Natural killer cell (primary cell): ENCODE measurements at regions of chr13 and their contacts with region 1.

Region 1: GRCh38 chr13:48334534-48335127 is 31.1 kb downstream of the RB1 start:
- DNase-seq: peak in 1 of 2 donors; percentile 74
- ATAC-seq: peak; percentile 62 to 84 (median 77)
- H3K4me3 ChIP-seq: no peak overlapping the region
- H3K4me3 Mint-ChIP-seq: no peak overlapping the region
- H3K27ac ChIP-seq: no peak overlapping the region
- H3K27ac Mint-ChIP-seq: no peak overlapping the region
- H3K4me1 ChIP-seq: no peaks in the 10 kb centered on the region
- H3K4me1 Mint-ChIP-seq: peaks cover 5 to 9% of the 10 kb centered on the region in 2 donors
- H3K27me3 ChIP-seq: no peaks in the 10 kb centered on the region
- H3K27me3 Mint-ChIP-seq: no peaks in the 10 kb centered on the region
- CTCF ChIP-seq: peak; percentile 94

Region 2: DNA sequence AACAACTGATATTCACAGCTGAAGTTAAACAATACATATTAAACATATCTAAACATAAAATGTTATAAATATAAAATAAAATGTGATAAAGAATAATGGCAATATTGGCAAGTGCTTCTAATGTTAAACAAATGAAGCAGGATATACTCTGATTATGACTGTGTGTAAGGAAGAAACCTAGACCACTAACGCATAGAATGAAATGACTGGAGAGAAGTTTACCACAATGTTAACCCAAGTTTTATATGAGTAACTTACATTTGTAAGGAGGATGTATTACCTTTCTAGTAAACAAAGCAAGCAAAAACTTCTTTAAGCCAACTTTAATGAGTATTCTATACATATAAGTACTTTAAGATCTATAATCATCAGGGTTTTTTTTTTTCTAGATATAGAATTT is 12.0 kb after region 1 on chr13:
- intact Hi-C with region 1: no loop called
- DNase-seq: no peak
- ATAC-seq: no peak
- H3K4me3 ChIP-seq: no peak overlapping the region
- H3K4me3 Mint-ChIP-seq: no peak overlapping the region
- H3K27ac ChIP-seq: no peak overlapping the region
- H3K27ac Mint-ChIP-seq: no peak overlapping the region
- H3K4me1 ChIP-seq: no peaks in the 10 kb centered on the region
- H3K4me1 Mint-ChIP-seq: peaks cover 15 to 19% of the 10 kb centered on the region in 2 donors
- H3K27me3 ChIP-seq: no peaks in the 10 kb centered on the region
- H3K27me3 Mint-ChIP-seq: no peaks in the 10 kb centered on the region
- CTCF ChIP-seq: no peak

Region 3: DNA sequence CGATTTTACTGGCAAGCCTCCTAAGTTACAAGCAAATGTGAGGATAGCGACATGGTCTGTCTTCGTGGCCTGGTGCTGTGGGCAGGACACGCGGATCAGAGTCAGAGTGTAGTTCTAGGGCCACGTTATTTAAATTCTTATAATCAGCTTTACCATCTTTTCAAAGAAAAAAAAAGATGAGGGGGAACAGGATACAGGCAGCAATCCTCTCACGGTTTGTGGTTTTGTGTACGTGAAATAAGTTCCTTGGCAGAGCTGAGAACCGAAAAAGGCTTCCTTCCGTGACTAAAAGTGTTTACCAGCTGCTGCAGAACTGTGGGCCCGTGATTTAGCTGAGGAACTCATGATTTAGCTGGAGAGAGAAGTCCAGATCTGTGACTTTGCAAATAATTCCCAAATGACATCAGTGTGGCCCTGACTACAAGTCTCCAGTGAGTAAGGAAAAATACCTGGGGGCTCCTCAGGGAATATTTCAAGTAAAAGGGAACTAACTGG is 171.0 kb after region 1 on chr13:
- intact Hi-C with region 1: loop called (anchors 10 kb)
- DNase-seq: peak in 1 of 2 donors; percentile 91
- ATAC-seq: peak; percentile 17 to 65 (median 50)
- H3K4me3 ChIP-seq: no peak overlapping the region
- H3K4me3 Mint-ChIP-seq: peak overlapping the region; percentile 85
- H3K27ac ChIP-seq: peak overlapping the region; percentile 80
- H3K27ac Mint-ChIP-seq: peak overlapping the region; percentile 91 to 97
- H3K4me1 ChIP-seq: peaks cover 48% of the 10 kb centered on the region
- H3K4me1 Mint-ChIP-seq: peaks cover 57 to 75% of the 10 kb centered on the region in 2 donors
- H3K27me3 ChIP-seq: no peaks in the 10 kb centered on the region
- H3K27me3 Mint-ChIP-seq: no peaks in the 10 kb centered on the region
- CTCF ChIP-seq: no peak

Region 4: DNA sequence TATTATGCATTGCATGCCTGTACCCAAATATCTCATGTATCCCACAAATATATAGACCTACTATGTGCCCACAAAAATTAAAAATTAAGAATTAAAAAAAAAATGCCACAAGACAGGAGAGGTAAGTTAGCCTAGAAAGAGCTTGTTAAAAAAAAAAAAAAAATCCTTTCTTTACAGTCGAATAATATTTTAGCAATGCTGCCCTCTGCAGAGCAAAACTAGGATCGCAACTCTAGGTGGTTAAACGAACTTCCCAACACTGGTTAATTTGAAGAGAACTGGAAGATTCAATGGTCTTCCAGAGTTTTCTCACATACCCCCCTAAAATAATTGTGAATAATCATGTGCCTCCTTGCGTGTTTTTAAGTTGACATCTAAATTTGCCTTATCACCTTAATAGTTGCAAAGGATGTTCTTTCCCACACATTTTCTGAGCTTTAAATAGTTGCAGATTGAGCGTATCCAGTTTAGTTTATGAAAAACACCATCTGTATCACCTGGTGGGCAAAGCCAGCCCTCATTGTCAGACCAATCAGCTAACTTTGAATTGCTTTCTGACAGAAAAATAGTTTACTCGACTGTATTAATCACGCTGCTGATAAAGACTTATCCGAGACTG is 245.7 kb after region 1 on chr13:
- intact Hi-C with region 1: loop called (anchors 1 kb)
- DNase-seq: peak; percentile 56 to 86
- ATAC-seq: peak; percentile 72 to 79 (median 78)
- H3K4me3 ChIP-seq: no peak overlapping the region
- H3K4me3 Mint-ChIP-seq: no peak overlapping the region
- H3K27ac ChIP-seq: no peak overlapping the region
- H3K27ac Mint-ChIP-seq: no peak overlapping the region
- H3K4me1 ChIP-seq: peaks cover 21% of the 10 kb centered on the region
- H3K4me1 Mint-ChIP-seq: peaks cover 6 to 27% of the 10 kb centered on the region in 2 donors
- H3K27me3 ChIP-seq: no peaks in the 10 kb centered on the region
- H3K27me3 Mint-ChIP-seq: peaks cover 6 to 12% of the 10 kb centered on the region in 2 donors
- CTCF ChIP-seq: peak; percentile 89

Region 5: DNA sequence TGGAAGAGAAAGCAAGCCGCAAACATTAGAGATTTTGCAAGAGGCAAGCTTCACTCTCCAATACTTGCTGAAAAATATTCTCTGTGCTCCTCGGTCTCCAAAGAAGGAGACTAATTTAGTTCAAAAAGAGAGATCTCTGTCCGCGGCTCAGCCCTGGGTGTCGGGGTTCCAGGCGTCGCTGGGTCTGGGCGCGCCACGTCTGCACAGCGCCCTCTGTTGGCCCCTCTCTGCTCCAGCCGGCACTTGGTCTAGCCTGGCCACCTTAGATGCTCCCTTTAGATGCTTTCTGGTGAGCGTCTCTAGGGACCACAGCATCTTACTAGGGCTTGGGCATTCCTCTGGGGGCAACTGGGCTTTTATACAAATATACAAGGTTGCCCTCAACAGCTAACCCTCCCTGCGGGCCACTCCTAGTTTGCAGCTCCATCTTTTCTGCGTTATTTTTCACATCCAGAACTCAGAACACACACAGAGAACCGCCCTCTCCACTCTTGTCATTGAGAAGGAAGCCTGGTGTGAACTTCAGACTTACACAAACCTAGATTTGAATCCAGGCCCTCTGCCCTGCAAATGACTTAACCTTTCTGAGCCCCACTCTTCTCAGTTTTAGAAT is 397.4 kb after region 1 on chr13:
- intact Hi-C with region 1: loop called (anchors 1 kb)
- DNase-seq: peak; percentile 51 to 78
- ATAC-seq: peak; percentile 84 to 98 (median 92)
- H3K4me3 ChIP-seq: no peak overlapping the region
- H3K4me3 Mint-ChIP-seq: peak overlapping the region; percentile 81
- H3K27ac ChIP-seq: no peak overlapping the region
- H3K27ac Mint-ChIP-seq: peak overlapping the region in 1 of 2 donors; percentile 39
- H3K4me1 ChIP-seq: peaks cover 4% of the 10 kb centered on the region
- H3K4me1 Mint-ChIP-seq: peaks cover 9 to 10% of the 10 kb centered on the region in 2 donors
- H3K27me3 ChIP-seq: no peaks in the 10 kb centered on the region
- H3K27me3 Mint-ChIP-seq: peaks cover 0 to 6% of the 10 kb centered on the region in 2 donors
- CTCF ChIP-seq: peak; percentile 82

Region 6: DNA sequence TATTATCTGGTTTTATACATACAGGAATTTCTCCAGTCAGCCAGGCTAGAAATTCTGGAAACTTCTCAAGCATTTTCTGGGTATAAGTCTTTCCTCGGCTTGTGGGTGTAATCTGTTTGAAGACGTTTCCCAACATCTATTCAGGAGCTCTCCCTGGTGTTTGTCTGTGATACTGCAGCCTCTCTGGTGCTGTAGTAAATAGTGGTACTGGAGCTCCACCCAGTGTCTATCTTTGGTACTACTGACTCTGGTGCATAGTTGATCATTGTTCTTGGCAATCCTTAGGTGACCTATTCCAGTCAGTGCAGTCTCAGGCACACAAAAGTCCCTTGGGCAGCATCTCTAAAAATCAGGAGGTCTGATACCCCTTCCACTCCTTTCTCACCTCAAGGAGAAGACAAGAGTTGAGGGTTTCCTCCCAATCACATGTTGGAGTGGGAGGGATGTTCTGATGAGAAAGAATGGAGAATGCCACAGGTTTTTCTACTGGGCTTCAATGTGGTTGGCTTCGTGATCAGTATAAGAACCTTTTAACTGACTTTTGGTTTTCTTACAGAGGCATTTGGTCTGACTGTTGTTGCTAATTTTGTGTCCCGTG is 434.6 kb after region 1 on chr13:
- intact Hi-C with region 1: loop called (anchors 2 kb)
- DNase-seq: peak; percentile 68 to 92
- ATAC-seq: peak; percentile 100
- H3K4me3 ChIP-seq: no peak overlapping the region
- H3K4me3 Mint-ChIP-seq: no peak overlapping the region
- H3K27ac ChIP-seq: no peak overlapping the region
- H3K27ac Mint-ChIP-seq: no peak overlapping the region
- H3K4me1 ChIP-seq: no peaks in the 10 kb centered on the region
- H3K4me1 Mint-ChIP-seq: peaks cover 6 to 8% of the 10 kb centered on the region in 2 donors
- H3K27me3 ChIP-seq: peaks cover 4% of the 10 kb centered on the region
- H3K27me3 Mint-ChIP-seq: peaks cover 21 to 44% of the 10 kb centered on the region in 2 donors
- CTCF ChIP-seq: peak; percentile 100